BJ (cell line): ENCODE measurements at regions of chr9 and their contacts with region 1.

Region 1: DNA sequence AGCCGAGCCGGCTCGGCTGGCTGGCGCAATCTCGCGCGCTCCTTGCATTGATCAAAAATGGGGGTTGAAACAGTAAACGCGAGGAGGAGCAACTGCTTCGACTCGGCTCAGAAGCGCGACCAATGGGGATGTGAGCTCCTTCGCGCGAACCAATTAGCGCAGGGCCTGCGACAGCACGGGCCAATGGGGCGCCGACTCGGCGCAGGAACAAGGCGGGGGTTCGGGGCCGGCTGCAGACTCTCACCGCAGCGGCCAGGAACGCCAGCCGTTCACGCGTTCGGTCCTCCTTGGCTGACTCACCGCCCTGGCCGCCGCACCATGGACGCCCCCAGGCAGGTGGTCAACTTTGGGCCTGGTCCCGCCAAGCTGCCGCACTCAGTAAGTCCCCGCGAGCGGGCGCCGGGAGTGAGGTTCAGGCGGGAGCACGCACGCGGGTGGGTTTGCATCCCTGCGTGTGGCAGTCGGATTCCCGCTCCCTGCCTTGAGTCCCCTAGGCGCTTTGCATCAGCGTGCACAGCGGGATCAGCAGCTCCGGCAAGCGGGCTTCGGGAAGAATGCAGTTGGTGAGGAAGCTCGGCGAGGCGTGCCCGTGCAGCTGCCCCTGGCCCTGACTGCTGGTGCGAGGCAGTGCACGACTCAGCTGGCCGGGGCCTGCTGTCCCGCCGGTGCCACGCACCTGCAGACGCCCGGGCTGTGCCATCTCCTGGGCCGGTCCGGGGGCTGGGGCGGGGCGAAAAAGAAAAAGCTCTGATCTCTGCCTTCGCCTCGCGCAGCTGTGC is at the start of gene PSAT1:
- DNase-seq: peak; percentile 87
- H3K4me3 ChIP-seq: peak within 1 kb of the TSS; percentile 96
- H3K27me3 ChIP-seq: no peaks in the 10 kb centered on the region
- CTCF ChIP-seq: peak; percentile 6; the same call in 1 of the 2 replicates
- polyA plus RNA-seq, gene PSAT1: 307 and 428 TPM in 2 replicates

Region 2: GRCh38 chr9:77785341-77785740 is 511.7 kb before region 1 on chr9:
- CTCF ChIA-PET with region 1: no interaction called
- POLR2A ChIA-PET with region 1: no interaction called
- DNase-seq: no peak
- H3K4me3 ChIP-seq: no peak overlapping the region
- H3K27me3 ChIP-seq: no peaks in the 10 kb centered on the region
- CTCF ChIP-seq: no peak

Region 3: DNA sequence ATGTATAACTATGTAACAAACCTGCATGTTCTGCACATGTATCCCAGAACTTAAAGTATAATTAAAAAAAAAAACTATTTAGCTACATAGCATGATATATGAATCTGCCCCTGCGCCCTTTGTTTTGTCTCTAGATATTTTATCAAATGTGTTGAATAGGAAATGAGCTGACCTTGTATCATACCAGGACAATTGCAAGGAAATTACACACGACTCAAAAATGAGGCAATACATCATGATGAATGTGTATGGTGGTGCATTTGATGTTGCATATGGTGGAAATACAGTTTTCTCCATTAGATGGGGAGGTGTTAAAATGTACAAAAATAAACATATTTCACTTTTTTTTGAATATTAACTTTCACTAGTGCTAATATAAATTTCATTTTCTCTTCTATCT is 89.8 kb before region 1 on chr9:
- CTCF ChIA-PET with region 1: no interaction called
- POLR2A ChIA-PET with region 1: no interaction called
- DNase-seq: no peak
- H3K4me3 ChIP-seq: no peak overlapping the region
- H3K27me3 ChIP-seq: no peaks in the 10 kb centered on the region
- CTCF ChIP-seq: no peak

Region 4: GRCh38 chr9:78314953-78315870 is 18.1 kb after region 1 on chr9:
- CTCF ChIA-PET with region 1: interaction called, 8 read pairs
- POLR2A ChIA-PET with region 1: interaction called, 15 read pairs
- DNase-seq: peak; percentile 65
- H3K4me3 ChIP-seq: no peak overlapping the region
- H3K27me3 ChIP-seq: no peaks in the 10 kb centered on the region
- CTCF ChIP-seq: no peak